Endothelial cell of umbilical vein (primary cell): ENCODE measurements at regions of chr2 and their contacts with region 1.

Region 1: DNA sequence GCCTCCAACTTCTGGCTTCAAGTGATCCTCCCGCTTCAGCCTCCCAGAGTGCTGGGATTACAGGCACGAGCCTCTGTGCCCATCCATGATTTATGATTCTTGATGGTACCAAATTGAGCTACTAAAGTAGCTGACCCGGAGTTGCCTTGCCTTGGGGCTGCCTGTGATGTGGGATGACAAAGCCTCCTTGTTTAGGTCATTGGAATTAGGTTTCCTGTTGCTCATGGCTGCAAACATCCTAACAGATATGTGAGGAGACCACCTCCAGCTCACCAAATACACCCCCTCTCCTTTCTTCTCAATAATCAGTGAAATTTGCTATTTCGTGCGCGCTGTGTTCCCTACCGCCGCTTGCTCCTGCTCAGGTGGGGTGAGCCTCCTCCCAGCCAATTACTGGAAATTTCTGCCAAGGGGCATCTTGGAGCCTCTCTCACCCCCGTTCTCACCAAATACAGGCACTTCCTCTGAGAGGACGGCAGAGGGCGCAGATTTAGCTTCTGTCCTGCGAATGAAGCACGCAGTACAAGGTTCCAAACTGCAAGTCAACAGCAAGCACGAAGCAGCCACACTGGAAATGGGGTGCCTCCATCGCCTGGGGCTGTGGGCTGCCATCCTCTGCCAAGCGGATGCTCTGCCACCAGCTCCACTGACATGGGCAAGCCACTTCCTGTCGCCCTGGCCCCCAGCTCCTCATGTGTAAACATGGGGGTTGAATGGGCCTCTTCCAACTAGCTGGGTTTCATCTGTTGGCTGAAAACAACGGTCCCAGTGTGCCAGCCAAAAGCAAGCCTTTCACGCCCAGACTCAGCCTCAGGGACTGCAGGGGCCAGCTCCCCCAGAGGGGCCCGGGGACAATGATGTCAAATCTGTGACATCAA is 71.7 kb downstream of the NCAPH start:
- DNase-seq: peak; percentile 63
- H3K4me3 ChIP-seq: no peak overlapping the region
- H3K27ac ChIP-seq: no peak overlapping the region
- H3K4me1 ChIP-seq: no peaks in the 10 kb centered on the region
- H3K27me3 ChIP-seq: no peaks in the 10 kb centered on the region
- CTCF ChIP-seq: peak; percentile 74 to 86
- POLR2A ChIP-seq: no peak

Region 2: DNA sequence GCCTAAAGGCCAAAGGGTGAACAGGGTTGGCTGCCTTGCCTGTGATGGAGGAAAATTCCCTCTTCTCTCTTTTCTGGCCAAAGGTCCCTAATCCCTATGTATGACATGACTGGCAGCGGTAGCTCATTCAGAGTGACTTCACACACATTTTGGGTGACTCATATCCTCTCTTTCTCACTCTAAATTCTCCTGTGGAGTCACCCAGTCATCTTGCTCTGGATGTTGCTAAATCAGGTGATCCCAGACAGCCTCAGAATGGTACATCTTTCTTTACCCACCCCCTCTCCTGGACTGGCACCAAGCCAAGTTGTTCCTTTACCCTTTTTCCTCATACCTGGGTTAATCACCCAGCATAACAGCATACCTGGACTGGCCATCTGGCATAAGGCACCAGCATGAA is 20.6 kb after region 1 on chr2:
- CTCF ChIA-PET with region 1: interaction called, 14 read pairs
- POLR2A ChIA-PET with region 1: no interaction called
- dilution Hi-C with region 1: no loop called
- intact Hi-C with region 1: no loop called
- DNase-seq: peak; percentile 56
- H3K4me3 ChIP-seq: no peak overlapping the region
- H3K27ac ChIP-seq: no peak overlapping the region
- H3K4me1 ChIP-seq: peaks cover 4% of the 10 kb centered on the region
- H3K27me3 ChIP-seq: peaks cover 5 to 7% of the 10 kb centered on the region in 2 experiments
- CTCF ChIP-seq: no peak
- POLR2A ChIP-seq: no peak

Region 3: GRCh38 chr2:96449637-96450036 is 42.4 kb after region 1 on chr2:
- CTCF ChIA-PET with region 1: interaction called, 16 read pairs
- POLR2A ChIA-PET with region 1: no interaction called
- dilution Hi-C with region 1: no loop called
- intact Hi-C with region 1: no loop called
- DNase-seq: no peak
- H3K4me3 ChIP-seq: no peak overlapping the region
- H3K27ac ChIP-seq: no peak overlapping the region
- H3K4me1 ChIP-seq: no peaks in the 10 kb centered on the region
- H3K27me3 ChIP-seq: peaks cover 2 to 8% of the 10 kb centered on the region in 2 experiments
- CTCF ChIP-seq: no peak
- POLR2A ChIP-seq: no peak

Region 4: DNA sequence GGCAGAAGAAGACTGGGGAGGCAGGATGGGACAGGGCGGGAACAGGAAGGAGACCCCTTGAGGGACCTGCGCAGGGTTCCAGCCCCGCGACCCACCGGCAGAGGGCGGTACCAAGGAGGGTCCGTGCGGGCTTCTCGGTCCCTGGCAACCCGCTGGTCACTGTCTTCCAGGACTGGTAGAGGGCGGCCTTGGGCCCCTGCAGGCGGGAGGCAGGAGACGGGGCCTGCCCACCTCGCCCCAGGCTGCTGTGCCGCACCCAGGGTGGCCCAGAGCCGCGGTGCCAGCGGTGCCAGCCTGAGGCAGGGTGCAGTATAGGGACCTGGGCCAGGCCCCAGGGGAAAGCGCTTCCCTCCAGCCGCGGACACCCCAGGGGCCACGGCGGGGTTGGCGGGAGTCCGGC is 63.4 kb after region 1 on chr2:
- CTCF ChIA-PET with region 1: interaction called, 12 read pairs
- POLR2A ChIA-PET with region 1: no interaction called
- dilution Hi-C with region 1: no loop called
- intact Hi-C with region 1: no loop called
- DNase-seq: peak; percentile 54
- H3K4me3 ChIP-seq: no peak overlapping the region
- H3K27ac ChIP-seq: no peak overlapping the region
- H3K4me1 ChIP-seq: no peaks in the 10 kb centered on the region
- H3K27me3 ChIP-seq: peaks cover under 1 to 5% of the 10 kb centered on the region in 2 experiments
- CTCF ChIP-seq: peak; percentile 72 to 92
- POLR2A ChIP-seq: no peak

Region 5: DNA sequence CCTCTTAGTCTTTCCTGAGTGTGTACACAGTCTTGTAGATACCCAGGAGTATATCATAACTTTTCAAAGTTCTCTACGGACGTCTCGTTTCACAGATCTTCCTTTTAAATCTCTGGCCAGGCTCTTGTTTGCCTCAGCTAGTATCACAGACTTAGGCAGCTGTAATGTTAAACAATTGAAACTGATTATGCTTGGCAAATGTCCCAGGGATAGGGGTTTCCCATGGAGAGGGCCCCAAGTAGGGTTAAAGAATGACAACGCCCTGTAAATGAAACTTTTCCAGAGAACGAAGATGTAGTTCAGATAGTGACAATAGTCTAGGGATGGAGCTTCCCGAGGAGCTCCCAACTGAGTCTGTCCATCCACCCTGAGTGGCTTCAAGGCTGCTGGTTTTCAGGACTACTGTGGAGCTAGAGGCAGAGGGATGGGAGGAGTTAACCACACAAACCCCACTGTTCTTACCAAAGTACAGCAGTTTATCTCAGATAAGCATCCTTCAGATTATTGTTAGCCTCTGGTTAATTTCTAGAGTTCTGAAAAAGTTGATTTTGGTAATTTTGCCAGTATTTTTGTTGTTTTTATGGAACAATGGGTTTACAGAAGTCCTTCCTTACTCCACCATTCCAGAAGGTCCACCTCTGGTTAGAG is 88.8 kb after region 1 on chr2:
- CTCF ChIA-PET with region 1: interaction called, 15 read pairs
- POLR2A ChIA-PET with region 1: no interaction called
- dilution Hi-C with region 1: no loop called
- intact Hi-C with region 1: no loop called
- DNase-seq: peak; percentile 66
- H3K4me3 ChIP-seq: no peak overlapping the region
- H3K27ac ChIP-seq: no peak overlapping the region
- H3K4me1 ChIP-seq: no peaks in the 10 kb centered on the region
- H3K27me3 ChIP-seq: peaks cover 38 to 60% of the 10 kb centered on the region in 2 experiments
- CTCF ChIP-seq: no peak
- POLR2A ChIP-seq: no peak

Region 6: DNA sequence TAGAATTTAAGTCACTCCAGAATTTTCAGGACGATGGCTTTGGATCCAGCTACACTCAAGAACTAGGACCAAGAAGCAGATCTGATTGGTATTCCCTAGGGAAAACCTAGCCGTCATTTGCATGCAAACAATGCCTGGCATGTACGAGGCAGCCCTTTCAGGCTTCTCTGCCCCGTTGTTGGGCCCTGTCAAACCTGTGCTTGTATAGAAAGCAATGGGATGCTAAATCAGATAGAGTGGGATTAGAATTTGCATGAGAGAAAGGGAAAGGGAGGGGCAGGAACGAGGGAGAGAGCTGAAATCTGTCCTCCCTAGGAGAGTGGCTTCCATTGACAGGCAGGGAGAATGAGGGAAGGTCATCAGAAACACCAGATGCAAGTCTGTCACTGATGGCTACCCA is 157.8 kb after region 1 on chr2:
- CTCF ChIA-PET with region 1: no interaction called
- POLR2A ChIA-PET with region 1: no interaction called
- dilution Hi-C with region 1: no loop called
- intact Hi-C with region 1: no loop called
- DNase-seq: no peak
- H3K4me3 ChIP-seq: no peak overlapping the region
- H3K27ac ChIP-seq: no peak overlapping the region
- H3K4me1 ChIP-seq: no peaks in the 10 kb centered on the region
- H3K27me3 ChIP-seq: no peaks in the 10 kb centered on the region
- CTCF ChIP-seq: no peak
- POLR2A ChIP-seq: no peak